ENCODE measurements at regions of chr6 and their contacts with region 1.

Region 1: GRCh38 chr6:82720992-82721391 is 344.6 kb downstream of the UBE3D start:
- DNase-seq: no peak
- H3K4me3 Mint-ChIP-seq: no peak overlapping the region
- H3K27ac Mint-ChIP-seq: no peak overlapping the region
- H3K4me1 Mint-ChIP-seq: no peaks in the 10 kb centered on the region
- H3K27me3 Mint-ChIP-seq: no peaks in the 10 kb centered on the region
- CTCF ChIP-seq: no peak

Region 2: GRCh38 chr6:82257088-82257772 is 463.8 kb before region 1 on chr6:
- CTCF ChIA-PET with region 1: no interaction called
- POLR2A ChIA-PET with region 1: no interaction called
- intact Hi-C with region 1: loop called (anchors 10 kb)
- DNase-seq: no peak
- H3K4me3 Mint-ChIP-seq: no peak overlapping the region
- H3K27ac Mint-ChIP-seq: no peak overlapping the region
- H3K4me1 Mint-ChIP-seq: no peaks in the 10 kb centered on the region
- H3K27me3 Mint-ChIP-seq: no peaks in the 10 kb centered on the region
- CTCF ChIP-seq: no peak

Region 3: GRCh38 chr6:82622461-82622860 is 98.5 kb before region 1 on chr6:
- CTCF ChIA-PET with region 1: no interaction called
- POLR2A ChIA-PET with region 1: no interaction called
- intact Hi-C with region 1: no loop called
- DNase-seq: no peak
- H3K4me3 Mint-ChIP-seq: no peak overlapping the region
- H3K27ac Mint-ChIP-seq: no peak overlapping the region
- H3K4me1 Mint-ChIP-seq: no peaks in the 10 kb centered on the region
- H3K27me3 Mint-ChIP-seq: no peaks in the 10 kb centered on the region
- CTCF ChIP-seq: no peak

Region 4: DNA sequence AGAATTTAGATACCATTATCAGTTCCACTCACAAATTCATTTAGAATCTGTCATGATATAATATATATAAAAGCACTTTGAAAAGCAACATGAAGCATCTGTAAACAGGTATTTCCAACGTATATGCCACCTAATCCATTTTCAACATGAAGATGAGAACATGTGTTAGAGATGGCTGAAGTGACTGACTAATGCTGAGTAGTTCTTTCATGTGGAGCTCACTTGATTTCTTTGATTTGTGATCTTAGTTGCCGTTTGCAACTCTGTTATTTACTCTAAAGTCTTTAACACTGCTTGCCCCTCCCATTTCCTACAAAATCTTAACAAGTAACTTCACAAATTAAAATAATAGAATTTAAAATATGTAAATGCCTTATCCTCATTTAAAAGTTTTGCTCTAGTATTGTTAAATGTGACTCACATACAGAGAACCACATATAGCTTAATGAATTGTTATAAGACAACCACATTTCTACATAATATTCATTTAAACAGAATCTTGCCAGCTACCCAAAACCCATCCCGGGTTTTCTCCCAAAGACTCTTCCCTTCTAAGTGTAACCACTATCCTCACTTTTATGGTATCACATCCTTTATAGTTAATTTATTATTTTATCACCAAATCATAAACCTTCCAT is 631.6 kb after region 1 on chr6:
- CTCF ChIA-PET with region 1: no interaction called
- POLR2A ChIA-PET with region 1: no interaction called
- intact Hi-C with region 1: no loop called
- DNase-seq: no peak
- H3K4me3 Mint-ChIP-seq: no peak overlapping the region
- H3K27ac Mint-ChIP-seq: no peak overlapping the region
- H3K4me1 Mint-ChIP-seq: peaks cover 5% of the 10 kb centered on the region
- H3K27me3 Mint-ChIP-seq: no peaks in the 10 kb centered on the region
- CTCF ChIP-seq: no peak